H1 (cell line): ENCODE measurements at regions of chr4 and their contacts with region 1.

Region 1: DNA sequence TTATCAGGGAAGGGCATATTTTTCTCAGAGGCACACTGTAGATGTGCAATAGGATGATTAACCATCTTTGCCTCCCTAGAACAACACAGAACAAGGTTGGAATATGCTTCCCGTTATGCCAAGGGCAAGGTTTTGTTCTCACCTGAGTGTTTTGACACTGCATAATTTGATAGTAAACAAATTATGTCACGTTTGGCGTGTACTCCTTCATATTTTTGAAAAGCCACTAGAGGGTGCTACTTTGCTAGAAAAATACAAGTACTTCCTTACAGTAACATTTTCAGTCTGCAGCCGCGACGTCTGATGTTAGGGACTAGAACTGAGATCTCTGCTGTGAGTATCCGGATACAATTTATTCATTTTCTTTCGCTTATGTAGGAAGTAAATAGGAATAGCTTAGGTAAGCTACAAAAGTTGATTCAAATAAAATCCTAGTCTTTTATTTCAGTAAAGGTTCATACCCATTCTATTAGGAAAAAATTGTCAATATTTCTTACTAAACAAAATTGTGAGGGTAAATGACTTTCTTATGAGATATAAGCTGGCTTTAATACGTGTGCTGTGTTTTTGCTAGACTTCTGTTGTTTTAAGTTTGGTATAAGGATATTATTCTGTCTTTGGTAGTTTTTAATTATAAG is 181.1 kb upstream of the WDFY3 start:
- DNase-seq: no peak
- H3K4me3 ChIP-seq: no peak overlapping the region
- H3K27ac ChIP-seq: no peak overlapping the region
- H3K4me1 ChIP-seq: no peaks in the 10 kb centered on the region
- H3K27me3 ChIP-seq: no peaks in the 10 kb centered on the region
- CTCF ChIP-seq: peak in 2 of 3 experiments; percentile 47 to 60; a peak in 2 of 4 replicates
- EP300 ChIP-seq: no peak
- POLR2A ChIP-seq: no peak
- RAD21 ChIP-seq: peak; percentile 77 to 79

Region 2: DNA sequence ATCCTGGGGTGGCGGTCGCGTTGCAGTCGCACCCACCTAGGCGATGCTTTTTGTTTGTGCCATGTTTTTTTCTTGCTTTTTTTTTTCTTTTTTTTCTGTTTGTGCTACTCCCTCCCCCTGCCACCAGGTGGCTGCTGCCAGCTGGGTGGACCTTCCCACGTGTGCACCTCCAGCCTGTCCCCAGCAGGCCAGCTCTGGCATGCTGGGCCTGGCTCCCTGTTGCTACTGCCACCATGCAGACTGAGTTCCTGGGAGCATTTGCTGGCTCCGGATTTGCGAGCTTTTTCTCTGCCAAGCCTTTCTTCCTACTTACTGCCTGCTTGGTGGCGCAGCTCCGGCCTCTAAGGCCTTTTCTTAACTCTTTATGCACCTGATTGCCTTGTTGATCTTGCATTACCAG is 19.9 kb before region 1 on chr4:
- CTCF ChIA-PET with region 1: interaction called, 10 read pairs
- POLR2A ChIA-PET with region 1: no interaction called
- DNase-seq: peak; percentile 59 to 62
- H3K4me3 ChIP-seq: no peak overlapping the region
- H3K27ac ChIP-seq: no peak overlapping the region
- H3K4me1 ChIP-seq: peaks cover 2 to 16% (median 10%) of the 10 kb centered on the region in 4 experiments; a peak in 5 of 7 replicates
- H3K27me3 ChIP-seq: no peaks in the 10 kb centered on the region
- CTCF ChIP-seq: peak; percentile 72 to 75 (median 74)
- EP300 ChIP-seq: no peak
- POLR2A ChIP-seq: no peak
- RAD21 ChIP-seq: peak; percentile 39 to 61; a peak in 3 of 4 replicates

Region 3: GRCh38 chr4:85180533-85180932 is 33.0 kb after region 1 on chr4:
- CTCF ChIA-PET with region 1: interaction called, 11 read pairs
- POLR2A ChIA-PET with region 1: no interaction called
- DNase-seq: no peak
- H3K4me3 ChIP-seq: no peak overlapping the region
- H3K27ac ChIP-seq: no peak overlapping the region
- H3K4me1 ChIP-seq: no peaks in the 10 kb centered on the region
- H3K27me3 ChIP-seq: no peaks in the 10 kb centered on the region
- CTCF ChIP-seq: no peak
- EP300 ChIP-seq: no peak
- POLR2A ChIP-seq: no peak
- RAD21 ChIP-seq: no peak

Region 4: DNA sequence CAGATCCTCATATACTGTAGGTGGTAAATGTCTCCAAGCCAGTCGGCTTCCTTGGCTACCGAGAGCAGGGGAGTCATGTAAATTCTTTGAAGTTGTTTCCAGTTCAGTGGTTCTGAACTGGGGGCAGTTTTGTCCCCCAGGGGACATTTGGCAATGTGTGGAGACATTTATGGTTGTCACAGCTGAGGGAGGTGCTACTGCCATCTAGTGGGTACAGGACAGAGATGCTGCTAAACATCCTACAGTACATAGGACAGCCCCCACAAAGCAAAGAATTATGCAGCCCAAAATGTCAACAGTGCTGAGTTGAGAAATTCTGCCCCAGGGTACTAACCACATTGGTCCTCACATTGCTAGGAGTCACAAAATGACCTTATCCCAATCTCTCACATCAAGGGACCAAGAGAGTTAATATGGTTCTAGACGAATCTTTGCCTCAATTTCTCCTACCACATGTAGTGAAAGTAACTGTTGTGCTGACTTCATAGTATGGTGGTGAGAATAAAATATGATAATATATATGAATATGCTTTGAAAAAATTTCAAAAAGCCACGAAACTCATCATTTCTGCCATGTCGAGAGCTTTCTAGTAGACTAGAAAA is 223.0 kb after region 1 on chr4:
- CTCF ChIA-PET with region 1: interaction called, 16 read pairs
- POLR2A ChIA-PET with region 1: no interaction called
- DNase-seq: peak; percentile 7 to 63
- H3K4me3 ChIP-seq: no peak overlapping the region
- H3K27ac ChIP-seq: no peak overlapping the region
- H3K4me1 ChIP-seq: peaks cover 0 to 10% (median 0%) of the 10 kb centered on the region in 4 experiments; a peak in 1 of 7 replicates
- H3K27me3 ChIP-seq: no peaks in the 10 kb centered on the region
- CTCF ChIP-seq: peak; percentile 52 to 84 (median 79)
- EP300 ChIP-seq: no peak
- POLR2A ChIP-seq: no peak
- RAD21 ChIP-seq: peak; percentile 82 to 89